Posterior vena cava (tissue), 2 donors: ENCODE measurements at regions of chr19 and their contacts with region 1.

Region 1: GRCh38 chr19:15629003-15629880 is 11.5 kb upstream of the CYP4F3 start:
- DNase-seq: peak; percentile 95

Region 2: GRCh38 chr19:15393963-15394362 is 235.3 kb before region 1 on chr19:
- intact Hi-C with region 1: no loop called
- DNase-seq: no peak

Region 3: DNA sequence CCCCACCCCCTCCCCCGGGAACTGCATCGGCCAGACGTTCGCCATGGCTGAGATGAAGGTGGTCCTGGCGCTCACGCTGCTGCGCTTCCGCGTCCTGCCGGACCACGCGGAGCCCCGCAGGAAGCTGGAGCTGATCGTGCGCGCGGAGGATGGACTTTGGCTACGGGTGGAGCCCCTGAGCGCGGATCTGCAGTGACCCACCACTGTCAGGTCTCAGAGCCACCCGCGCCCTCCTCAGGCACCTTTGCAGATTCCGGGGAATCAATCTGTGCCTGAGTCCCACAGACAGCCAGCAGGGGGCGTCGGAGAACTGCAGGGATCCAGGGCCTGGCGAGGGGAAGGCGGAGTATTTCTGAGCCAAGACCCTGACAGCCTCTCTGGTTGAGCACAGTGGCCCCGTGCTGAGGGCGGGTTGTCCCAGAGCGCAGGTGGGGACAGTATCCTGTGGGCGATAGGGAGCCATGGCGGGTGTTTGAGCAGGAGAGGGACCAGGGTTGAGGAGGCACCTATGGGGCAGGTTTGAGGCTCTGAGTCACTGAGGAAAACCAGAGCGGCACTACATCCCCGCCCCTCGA is 44.6 kb before region 1 on chr19:
- intact Hi-C with region 1: no loop called
- DNase-seq: peak; percentile 94

Region 4: GRCh38 chr19:15684831-15685230 is 55.6 kb after region 1 on chr19:
- intact Hi-C with region 1: no loop called
- DNase-seq: no peak

Region 5: GRCh38 chr19:15869109-15869555 is 239.9 kb after region 1 on chr19:
- intact Hi-C with region 1: loop called (anchors 10 kb)
- DNase-seq: no peak

Region 6: GRCh38 chr19:16446724-16447368 is 817.6 kb after region 1 on chr19:
- intact Hi-C with region 1: loop called in 1 of 2 experiments (anchors 10 kb)
- DNase-seq: peak; percentile 92